CD4-positive, alpha-beta T cell (primary cell): ENCODE measurements at regions of chr2 and their contacts with region 1.

Region 1: GRCh38 chr2:175880-176800 is 87.7 kb downstream of the SH3YL1 start:
- DNase-seq: peak; percentile 14 to 82 (median 52)
- ATAC-seq: peak; percentile 95
- H3K4me3 ChIP-seq: peak overlapping the region; percentile 9
- H3K4me3 Mint-ChIP-seq: peak overlapping the region; percentile 76
- H3K27ac ChIP-seq: peak overlapping the region in 1 of 2 donors; percentile 50
- H3K27ac Mint-ChIP-seq: peak overlapping the region; percentile 92
- H3K4me1 ChIP-seq: peaks cover 38% of the 10 kb centered on the region
- H3K4me1 Mint-ChIP-seq: peaks cover 48% of the 10 kb centered on the region
- H3K27me3 ChIP-seq: no peaks in the 10 kb centered on the region
- H3K27me3 Mint-ChIP-seq: no peaks in the 10 kb centered on the region
- CTCF ChIP-seq: no peak

Region 2: DNA sequence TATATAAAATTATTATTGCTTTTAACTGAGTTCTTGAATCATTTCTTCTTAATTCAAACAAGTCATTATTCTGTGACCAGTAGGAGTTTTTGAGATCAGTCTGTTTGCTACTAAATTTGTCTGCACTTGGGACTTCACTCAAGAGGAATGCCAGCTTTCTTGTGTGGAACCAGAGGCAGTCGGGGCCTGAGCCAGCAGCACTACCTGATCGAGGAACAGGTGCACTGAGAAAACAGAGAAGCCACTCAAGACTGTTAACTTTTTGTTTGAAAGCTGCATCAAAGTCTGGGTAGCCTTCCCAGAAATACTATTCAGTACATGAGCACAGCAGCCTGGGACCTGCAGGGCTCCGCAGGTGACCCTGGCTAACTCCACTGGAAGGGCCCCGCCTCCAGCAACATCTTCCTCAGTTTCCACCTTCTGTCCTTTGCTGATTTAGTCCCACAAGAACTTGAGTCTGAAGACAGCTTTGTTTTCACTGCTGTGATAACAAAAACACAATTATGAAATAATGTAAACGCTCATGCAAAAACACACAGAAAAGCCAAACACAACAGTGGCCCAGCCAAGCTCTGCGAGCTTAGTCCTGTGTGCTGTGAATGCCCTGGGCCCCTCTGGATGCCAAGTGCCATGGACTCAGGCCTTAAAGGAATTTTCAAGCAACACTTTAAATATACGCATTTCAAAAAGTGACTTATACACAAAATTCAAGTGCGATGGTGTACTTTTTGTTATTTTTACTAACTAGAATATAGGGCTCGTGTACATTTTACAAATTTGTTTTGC is 25.7 kb after region 1 on chr2:
- CTCF ChIA-PET with region 1: no interaction called
- POLR2A ChIA-PET with region 1: interaction called, 13 read pairs
- intact Hi-C with region 1: no loop called
- DNase-seq: no peak
- ATAC-seq: no peak
- H3K4me3 ChIP-seq: no peak overlapping the region
- H3K4me3 Mint-ChIP-seq: no peak overlapping the region
- H3K27ac ChIP-seq: no peak overlapping the region
- H3K27ac Mint-ChIP-seq: peak overlapping the region; percentile 50
- H3K4me1 ChIP-seq: peaks cover 10% of the 10 kb centered on the region
- H3K4me1 Mint-ChIP-seq: peaks cover 20% of the 10 kb centered on the region
- H3K27me3 ChIP-seq: no peaks in the 10 kb centered on the region
- H3K27me3 Mint-ChIP-seq: no peaks in the 10 kb centered on the region
- CTCF ChIP-seq: no peak

Region 3: DNA sequence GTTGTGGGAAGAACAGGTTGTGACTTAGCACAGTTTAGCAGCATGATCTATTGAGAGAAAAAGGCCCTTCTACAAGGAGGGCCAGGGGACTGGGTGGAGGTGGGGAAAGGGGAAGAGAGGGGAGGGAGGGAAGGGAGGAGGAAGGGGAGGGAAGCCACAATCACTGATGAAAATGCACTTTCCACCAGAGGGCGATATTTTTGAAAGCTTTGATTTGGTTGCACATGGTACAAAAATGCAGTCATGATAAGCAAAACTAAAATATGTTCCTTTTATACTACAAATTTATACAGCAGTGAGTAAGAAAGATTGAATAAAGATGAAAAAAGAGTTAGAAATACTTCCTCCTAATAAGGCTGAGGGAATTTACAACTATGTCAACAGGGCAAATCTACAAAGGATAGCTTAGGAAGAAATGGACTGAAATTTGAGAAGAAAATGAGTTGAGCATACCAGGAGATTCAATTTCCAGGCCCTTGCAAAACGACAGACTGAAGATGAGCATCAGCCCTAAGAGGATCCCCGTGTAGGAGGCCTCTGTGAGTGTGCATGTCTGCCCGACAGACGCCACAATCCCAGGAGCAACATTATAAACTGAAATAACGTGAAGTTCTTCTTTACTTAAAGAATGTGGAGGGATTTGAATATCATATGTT is 70.5 kb after region 1 on chr2:
- CTCF ChIA-PET with region 1: no interaction called
- POLR2A ChIA-PET with region 1: no interaction called
- intact Hi-C with region 1: loop called in 1 of 2 experiments (anchors 5 kb)
- DNase-seq: peak in 9 of 14 experiments; percentile 5 to 75 (median 14)
- ATAC-seq: peak; percentile 60
- H3K4me3 ChIP-seq: no peak overlapping the region
- H3K4me3 Mint-ChIP-seq: no peak overlapping the region
- H3K27ac ChIP-seq: no peak overlapping the region
- H3K27ac Mint-ChIP-seq: no peak overlapping the region
- H3K4me1 ChIP-seq: no peaks in the 10 kb centered on the region
- H3K4me1 Mint-ChIP-seq: peaks cover 7% of the 10 kb centered on the region
- H3K27me3 ChIP-seq: no peaks in the 10 kb centered on the region
- H3K27me3 Mint-ChIP-seq: no peaks in the 10 kb centered on the region
- CTCF ChIP-seq: peak; percentile 79

Region 4: GRCh38 chr2:290090-290722 is 114.1 kb after region 1 on chr2:
- CTCF ChIA-PET with region 1: no interaction called
- POLR2A ChIA-PET with region 1: interaction called, 3 read pairs
- intact Hi-C with region 1: loop called in 1 of 2 experiments (anchors 1 kb)
- DNase-seq: peak; percentile 18 to 70 (median 49)
- ATAC-seq: peak; percentile 51
- H3K4me3 ChIP-seq: peak overlapping the region; percentile 25
- H3K4me3 Mint-ChIP-seq: peak overlapping the region; percentile 81
- H3K27ac ChIP-seq: no peak overlapping the region
- H3K27ac Mint-ChIP-seq: no peak overlapping the region
- H3K4me1 ChIP-seq: peaks cover 17% of the 10 kb centered on the region
- H3K4me1 Mint-ChIP-seq: peaks cover 16% of the 10 kb centered on the region
- H3K27me3 ChIP-seq: peaks cover 39 to 40% of the 10 kb centered on the region in 2 experiments
- H3K27me3 Mint-ChIP-seq: peaks cover 65% of the 10 kb centered on the region
- CTCF ChIP-seq: peak; percentile 76